Activated naive CD4-positive, alpha-beta T cell treated with anti-CD3 and anti-CD28 coated beads for 36 hours (primary cell): ENCODE measurements at regions of chr16 and their contacts with region 1.

Region 1: DNA sequence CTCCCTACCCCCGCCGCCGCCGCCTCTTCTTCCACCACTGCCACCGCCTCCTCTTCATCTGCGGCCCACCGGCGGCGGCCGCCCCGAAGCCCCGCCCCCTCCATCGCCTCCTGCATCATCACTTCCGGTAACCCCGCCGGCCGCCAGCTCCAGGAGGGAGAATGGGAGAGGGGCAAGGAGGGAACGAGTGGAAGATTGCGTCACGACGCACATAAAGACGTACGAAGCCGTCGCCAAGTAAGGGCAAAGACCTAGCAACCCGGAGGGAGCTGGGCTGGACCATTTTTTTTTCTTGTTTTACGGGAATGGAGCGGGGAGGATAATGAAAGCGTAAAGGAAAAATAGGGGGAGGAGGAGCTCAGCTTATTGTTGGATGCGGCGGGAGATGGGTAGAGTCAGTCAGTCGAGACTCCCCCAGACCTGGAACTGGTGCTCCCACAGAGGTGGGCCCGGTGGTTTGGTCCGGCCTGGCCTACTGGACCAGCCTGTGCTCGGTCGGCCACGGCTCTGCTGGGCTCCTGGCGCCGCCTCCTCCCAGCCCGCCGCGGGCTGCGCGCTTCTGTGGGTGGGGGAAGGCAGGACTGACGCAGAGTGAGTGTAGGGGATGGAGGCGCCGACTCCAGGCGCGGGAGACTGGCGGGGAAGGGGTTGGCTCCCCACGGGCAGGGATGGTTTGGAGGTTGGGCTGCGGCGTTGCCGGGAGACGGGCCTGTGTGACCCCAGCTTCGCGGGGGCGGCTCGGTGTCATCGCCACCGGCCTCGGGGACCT is at the starts of genes DCUN1D3 and LYRM1:
- DNase-seq: peak; percentile 88
- H3K4me3 Mint-ChIP-seq: peak within 1 kb of the TSS; percentile 96
- H3K27ac Mint-ChIP-seq: peak within 1 kb of the TSS; percentile 98
- H3K4me1 Mint-ChIP-seq: peaks cover 59% of the 10 kb centered on the region
- H3K27me3 Mint-ChIP-seq: no peaks in the 10 kb centered on the region
- total RNA-seq, gene DCUN1D3: 3.0 to 3.4 TPM
- total RNA-seq, gene LYRM1: 20.4 to 20.8 TPM

Region 2: DNA sequence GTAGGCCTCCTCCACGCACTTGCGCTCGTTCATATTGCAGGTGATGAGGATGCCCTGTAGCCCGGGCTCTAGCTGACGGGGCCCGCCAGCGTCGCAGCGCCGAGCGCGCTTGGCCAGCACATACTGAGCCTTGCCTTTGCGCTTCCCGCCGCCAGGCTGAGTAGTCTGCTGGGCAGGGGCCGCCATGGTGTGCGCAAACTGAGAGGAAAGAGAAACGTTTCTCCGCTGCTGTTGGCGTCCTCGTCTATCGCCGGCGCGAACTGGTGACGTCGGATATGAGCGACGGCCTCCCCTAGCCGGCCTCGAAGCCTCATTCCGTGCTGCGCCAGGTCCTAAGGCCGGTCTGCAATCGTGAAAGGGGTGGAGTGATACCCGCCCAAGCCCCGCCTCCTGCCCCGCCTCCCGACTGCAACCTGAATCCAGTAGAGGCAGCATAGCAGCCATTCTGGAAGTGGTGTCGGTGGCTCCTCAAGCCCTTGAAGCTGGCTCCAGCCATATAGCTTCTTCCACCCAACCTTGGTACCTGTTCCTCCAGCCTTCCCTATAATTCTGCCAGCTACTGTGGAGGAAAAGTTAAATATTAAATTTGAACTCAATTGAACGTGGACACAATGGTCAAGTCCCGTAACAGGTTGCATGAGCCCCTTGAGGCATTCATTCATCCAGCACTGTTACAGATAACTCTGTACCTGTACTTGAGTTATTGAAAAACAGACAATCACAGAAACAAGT is 158.8 kb before region 1 on chr16 and contains the start of gene THUMPD1:
- CTCF ChIA-PET with region 1: interaction called, 3 read pairs
- intact Hi-C with region 1: loop called (anchors 1 kb)
- DNase-seq: peak; percentile 100
- H3K4me3 Mint-ChIP-seq: peak within 1 kb of the TSS; percentile 94
- H3K27ac Mint-ChIP-seq: peak within 1 kb of the TSS; percentile 95
- H3K4me1 Mint-ChIP-seq: peaks cover 29% of the 10 kb centered on the region
- H3K27me3 Mint-ChIP-seq: no peaks in the 10 kb centered on the region
- total RNA-seq, gene THUMPD1: 47.5 to 49.8 TPM

Region 3: GRCh38 chr16:20763461-20764232 is 136.8 kb before region 1 on chr16 and contains the start of gene ACSM3:
- CTCF ChIA-PET with region 1: no interaction called
- intact Hi-C with region 1: loop called (anchors 1 kb)
- DNase-seq: peak; percentile 83
- H3K4me3 Mint-ChIP-seq: peak within 1 kb of the TSS; percentile 87
- H3K27ac Mint-ChIP-seq: peak within 1 kb of the TSS; percentile 94
- H3K4me1 Mint-ChIP-seq: peaks cover 25% of the 10 kb centered on the region
- H3K27me3 Mint-ChIP-seq: no peaks in the 10 kb centered on the region
- total RNA-seq, gene ACSM3: 29.6 to 35.0 TPM

Region 4: GRCh38 chr16:20806168-20807050 is 94.1 kb before region 1 on chr16 and contains the starts of genes ERI2 and REXO5:
- CTCF ChIA-PET with region 1: no interaction called
- intact Hi-C with region 1: loop called (anchors 2 kb)
- DNase-seq: peak; percentile 87
- H3K4me3 Mint-ChIP-seq: peak within 1 kb of the TSS; percentile 98
- H3K27ac Mint-ChIP-seq: peak within 1 kb of the TSS; percentile 98
- H3K4me1 Mint-ChIP-seq: peaks cover 12% of the 10 kb centered on the region
- H3K27me3 Mint-ChIP-seq: no peaks in the 10 kb centered on the region
- total RNA-seq, gene ERI2: 18.4 to 19.6 TPM
- total RNA-seq, gene REXO5: 26.4 to 27.8 TPM

Region 5: DNA sequence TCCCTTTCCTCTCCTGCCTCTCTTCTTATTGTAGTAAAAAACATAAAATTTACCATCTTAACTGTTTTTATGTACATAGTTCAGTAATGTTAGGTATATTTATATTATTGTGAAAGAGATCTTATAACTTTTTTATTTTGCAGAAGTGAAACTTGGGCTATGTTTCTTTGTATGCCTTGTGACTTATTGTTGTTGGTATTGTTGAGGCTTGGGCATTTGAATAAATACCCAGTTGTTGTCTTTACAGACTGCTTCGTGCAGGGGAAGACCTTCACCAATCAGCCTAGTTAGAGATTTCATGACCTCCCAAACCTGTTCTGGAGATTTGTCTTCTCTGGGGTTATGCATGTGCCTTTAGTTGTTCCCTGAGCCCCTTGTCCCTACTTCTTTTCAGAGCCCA is 62.2 kb before region 1 on chr16:
- CTCF ChIA-PET with region 1: no interaction called
- intact Hi-C with region 1: no loop called
- DNase-seq: no peak
- H3K4me3 Mint-ChIP-seq: no peak overlapping the region
- H3K27ac Mint-ChIP-seq: no peak overlapping the region
- H3K4me1 Mint-ChIP-seq: no peaks in the 10 kb centered on the region
- H3K27me3 Mint-ChIP-seq: no peaks in the 10 kb centered on the region

Region 6: GRCh38 chr16:20874088-20874581 is 26.3 kb before region 1 on chr16:
- CTCF ChIA-PET with region 1: interaction called, 3 read pairs
- intact Hi-C with region 1: loop called (anchors 1 kb)
- DNase-seq: peak; percentile 30
- H3K4me3 Mint-ChIP-seq: no peak overlapping the region
- H3K27ac Mint-ChIP-seq: peak overlapping the region; percentile 78
- H3K4me1 Mint-ChIP-seq: peaks cover 53% of the 10 kb centered on the region
- H3K27me3 Mint-ChIP-seq: no peaks in the 10 kb centered on the region

Region 7: DNA sequence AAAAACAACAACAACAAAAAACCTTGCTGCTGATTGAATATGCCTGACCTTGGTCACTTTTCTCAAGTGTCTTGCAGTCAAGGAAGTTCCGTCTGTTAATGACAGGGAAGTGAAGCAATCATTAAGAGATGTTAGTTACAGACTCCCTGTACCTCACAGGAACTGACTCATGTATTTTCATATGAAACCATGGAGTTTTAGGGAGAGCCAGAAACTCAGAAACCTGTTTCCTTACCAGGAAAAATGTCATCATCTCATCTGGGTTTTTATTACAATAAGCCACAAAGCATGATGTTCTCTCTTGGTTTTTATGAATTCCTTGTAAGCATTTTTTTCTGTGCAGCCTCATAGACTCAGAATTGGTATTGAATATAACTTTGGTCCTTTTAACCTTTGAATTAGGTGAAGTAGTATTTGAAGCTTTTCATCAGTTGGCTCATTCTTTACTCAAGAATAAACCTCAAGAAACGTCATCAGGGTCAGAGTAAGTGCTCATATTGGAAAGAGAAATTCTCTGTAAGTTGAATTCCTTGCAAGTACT is 10.4 kb after region 1 on chr16:
- CTCF ChIA-PET with region 1: no interaction called
- intact Hi-C with region 1: loop called (anchors 1 kb)
- DNase-seq: no peak
- H3K4me3 Mint-ChIP-seq: no peak overlapping the region
- H3K27ac Mint-ChIP-seq: no peak overlapping the region
- H3K4me1 Mint-ChIP-seq: peaks cover 18% of the 10 kb centered on the region
- H3K27me3 Mint-ChIP-seq: no peaks in the 10 kb centered on the region

Region 8: DNA sequence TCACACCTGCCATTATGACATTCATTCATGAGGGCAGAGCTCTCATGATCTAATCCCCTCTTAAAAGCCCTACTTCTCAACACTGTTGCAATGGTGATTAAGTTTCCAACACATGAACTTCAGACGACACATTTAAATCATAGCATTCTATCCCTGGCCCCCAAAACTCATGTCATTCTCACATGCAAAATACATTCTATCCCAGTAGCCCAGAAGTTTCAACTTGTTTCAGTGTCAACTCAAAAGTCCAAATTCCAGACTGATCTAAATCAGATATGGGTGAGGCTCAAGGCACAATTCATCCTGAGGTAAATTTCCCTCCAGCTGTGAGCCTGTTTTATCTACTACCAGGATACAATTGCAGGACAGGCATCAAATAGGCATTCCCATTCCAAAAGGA is 25.3 kb after region 1 on chr16:
- CTCF ChIA-PET with region 1: no interaction called
- intact Hi-C with region 1: no loop called
- DNase-seq: no peak
- H3K4me3 Mint-ChIP-seq: no peak overlapping the region
- H3K27ac Mint-ChIP-seq: no peak overlapping the region
- H3K4me1 Mint-ChIP-seq: no peaks in the 10 kb centered on the region
- H3K27me3 Mint-ChIP-seq: no peaks in the 10 kb centered on the region

Region 9: DNA sequence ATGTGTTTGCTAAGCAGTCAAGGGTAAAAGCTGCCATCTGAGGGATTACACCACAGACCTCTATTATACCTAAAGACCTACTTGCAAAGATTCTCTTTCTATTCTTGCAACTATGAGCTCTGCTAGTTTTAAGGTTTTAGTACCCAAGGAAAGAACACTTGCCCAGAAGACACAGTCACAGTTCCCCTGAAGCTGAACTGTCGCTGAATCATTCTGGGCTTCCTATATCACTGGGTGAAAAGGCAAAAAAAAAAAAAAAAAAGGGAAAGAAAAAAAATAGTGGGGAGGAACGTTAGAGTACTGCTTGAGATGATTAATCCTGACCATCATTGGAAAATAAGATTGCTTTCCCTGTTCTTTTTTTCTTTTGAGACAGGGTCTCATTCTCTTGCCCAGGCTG is 37.9 kb after region 1 on chr16:
- CTCF ChIA-PET with region 1: no interaction called
- intact Hi-C with region 1: loop called (anchors 2 kb)
- DNase-seq: peak; percentile 46
- H3K4me3 Mint-ChIP-seq: no peak overlapping the region
- H3K27ac Mint-ChIP-seq: no peak overlapping the region
- H3K4me1 Mint-ChIP-seq: peaks cover 28% of the 10 kb centered on the region
- H3K27me3 Mint-ChIP-seq: no peaks in the 10 kb centered on the region

Region 10: GRCh38 chr16:20948444-20948843 is 48.0 kb after region 1 on chr16:
- CTCF ChIA-PET with region 1: no interaction called
- intact Hi-C with region 1: no loop called
- DNase-seq: no peak
- H3K4me3 Mint-ChIP-seq: no peak overlapping the region
- H3K27ac Mint-ChIP-seq: no peak overlapping the region
- H3K4me1 Mint-ChIP-seq: peaks cover 4% of the 10 kb centered on the region
- H3K27me3 Mint-ChIP-seq: no peaks in the 10 kb centered on the region